Cardiac septum (tissue), 1 donor: ENCODE measurements at regions of chr11 and their contacts with region 1.

Region 1: DNA sequence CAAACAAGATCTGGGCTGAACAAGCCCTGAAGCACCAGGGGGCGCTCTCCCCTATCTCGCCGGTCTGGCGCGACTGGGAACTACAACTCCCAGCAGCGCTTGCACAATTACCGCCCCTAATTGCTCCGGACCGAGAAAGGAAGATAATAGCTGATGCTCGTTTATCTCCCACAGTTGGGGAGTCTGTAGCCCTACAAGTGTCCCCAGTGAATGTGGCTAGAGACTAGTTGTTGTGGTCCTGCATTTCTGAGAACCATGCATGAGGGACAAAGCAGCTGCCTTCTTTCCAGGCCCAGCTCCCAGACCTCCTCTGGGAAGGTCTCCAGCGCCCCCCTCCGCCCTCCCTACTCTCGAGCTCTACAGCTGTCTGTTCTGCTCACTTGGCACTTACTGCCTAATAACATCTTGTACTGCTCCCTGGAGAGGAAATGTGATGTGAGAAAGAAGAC is 34.4 kb downstream of the NRXN2 start:
- DNase-seq: peak; percentile 94

Region 2: DNA sequence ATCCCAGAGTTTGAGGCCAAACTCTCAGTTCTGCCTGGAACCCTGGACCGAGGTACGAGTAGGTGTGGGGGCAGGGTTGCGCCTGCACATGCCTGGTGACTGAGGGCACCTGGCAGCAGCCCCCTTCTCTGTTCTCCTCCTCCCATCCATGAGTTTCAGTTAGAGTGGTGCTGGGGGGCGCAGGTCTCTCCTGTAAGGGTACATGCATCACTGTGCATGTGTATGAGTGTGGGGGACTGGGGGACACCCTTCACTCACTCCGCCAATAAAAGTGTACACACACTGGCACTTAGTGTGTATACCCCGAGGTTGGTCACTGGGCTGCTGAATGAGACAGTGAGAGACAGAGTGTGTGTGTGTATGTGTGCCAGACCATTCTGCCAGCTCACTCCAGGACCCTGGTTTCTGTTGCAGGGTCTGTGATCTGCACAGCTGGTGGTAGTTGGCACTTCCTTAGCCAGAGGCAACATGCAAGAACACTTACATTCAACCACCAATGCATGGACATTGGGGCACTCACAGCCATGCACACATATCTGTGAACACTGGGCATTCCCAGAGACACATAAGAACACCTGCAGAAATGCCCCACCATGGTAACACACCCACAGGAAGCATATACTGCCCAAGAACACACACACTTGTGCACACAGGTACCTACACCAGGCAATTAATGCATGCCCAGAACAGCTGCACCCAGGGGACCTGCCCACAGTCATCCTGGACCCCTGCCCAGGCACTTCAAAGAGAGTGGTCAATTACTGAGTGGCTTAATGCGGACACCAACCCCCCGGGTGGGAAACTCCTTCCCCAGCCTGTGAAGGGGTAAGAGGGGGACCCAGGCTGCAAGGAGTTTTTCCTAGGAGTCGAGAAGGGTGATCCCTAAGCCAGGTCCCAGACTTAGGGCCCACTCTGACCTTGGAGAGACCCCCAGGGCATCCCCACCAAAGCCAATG is 35.6 kb after region 1 on chr11:
- intact Hi-C with region 1: loop called (anchors 2 kb)
- DNase-seq: no peak